ENCODE measurements at regions of chr4 and their contacts with region 1.

Region 1: GRCh38 chr4:185597532-185598188 is 62.4 kb upstream of the PDLIM3 start:
- DNase-seq: peak; percentile 8
- H3K4me3 ChIP-seq: no peak overlapping the region
- H3K27me3 ChIP-seq: 0 out of 2 replicates have a peak, but pooled peaks cover 1% of the 10 kb centered on the region
- CTCF ChIP-seq: peak; percentile 99

Region 2: DNA sequence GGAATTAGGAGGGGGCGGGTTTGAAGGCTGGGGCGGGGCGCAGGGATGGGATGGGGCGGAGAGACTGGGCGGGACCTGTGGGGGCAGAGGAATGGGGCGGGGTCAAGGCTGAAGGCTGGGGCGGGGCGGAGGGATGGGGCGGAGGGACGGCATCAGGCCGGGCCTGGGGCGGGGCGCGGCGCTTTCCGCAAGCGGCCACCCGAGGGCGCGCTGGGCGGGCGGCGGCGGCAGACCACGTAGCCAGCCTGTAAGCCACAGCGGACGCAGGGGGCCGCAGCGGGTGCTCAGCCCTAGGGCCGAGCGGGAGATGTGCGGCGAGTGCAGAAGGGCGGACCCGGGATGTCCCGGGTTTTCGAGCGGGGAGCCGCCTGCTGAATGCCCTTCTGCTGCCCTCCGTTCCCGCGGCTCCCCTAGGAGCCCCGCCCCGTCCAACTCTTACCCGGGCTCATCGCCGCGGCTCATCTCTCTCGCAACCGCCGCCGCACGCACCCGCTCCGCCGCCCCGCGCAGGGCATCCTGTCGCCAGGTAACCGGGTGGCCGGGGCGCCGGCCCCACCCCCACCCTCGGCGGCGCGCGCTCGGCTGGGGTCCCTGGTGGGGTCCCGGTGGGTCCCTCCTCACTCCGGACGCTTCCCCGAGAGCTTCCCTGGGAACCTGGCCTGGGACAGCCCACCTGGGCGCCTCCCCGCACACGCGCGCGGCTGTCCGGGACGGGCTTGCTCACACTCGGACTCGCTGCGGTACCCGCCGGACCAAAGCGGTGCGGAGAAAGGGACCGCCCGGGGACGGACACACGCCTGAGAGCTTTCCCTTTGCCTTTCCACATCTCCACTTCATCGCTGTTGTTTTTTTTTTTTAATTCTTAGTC is 126.2 kb before region 1 on chr4 and contains the start of gene CCDC110:
- CTCF ChIA-PET with region 1: interaction called, 26 read pairs
- POLR2A ChIA-PET with region 1: no interaction called
- DNase-seq: peak; percentile 18
- H3K4me3 ChIP-seq: peak within 1 kb of the TSS; percentile 60
- H3K27me3 ChIP-seq: peaks cover 16% of the 10 kb centered on the region
- CTCF ChIP-seq: peak; percentile 47
- polyA plus RNA-seq, gene CCDC110: not detected in 2 replicates

Region 3: DNA sequence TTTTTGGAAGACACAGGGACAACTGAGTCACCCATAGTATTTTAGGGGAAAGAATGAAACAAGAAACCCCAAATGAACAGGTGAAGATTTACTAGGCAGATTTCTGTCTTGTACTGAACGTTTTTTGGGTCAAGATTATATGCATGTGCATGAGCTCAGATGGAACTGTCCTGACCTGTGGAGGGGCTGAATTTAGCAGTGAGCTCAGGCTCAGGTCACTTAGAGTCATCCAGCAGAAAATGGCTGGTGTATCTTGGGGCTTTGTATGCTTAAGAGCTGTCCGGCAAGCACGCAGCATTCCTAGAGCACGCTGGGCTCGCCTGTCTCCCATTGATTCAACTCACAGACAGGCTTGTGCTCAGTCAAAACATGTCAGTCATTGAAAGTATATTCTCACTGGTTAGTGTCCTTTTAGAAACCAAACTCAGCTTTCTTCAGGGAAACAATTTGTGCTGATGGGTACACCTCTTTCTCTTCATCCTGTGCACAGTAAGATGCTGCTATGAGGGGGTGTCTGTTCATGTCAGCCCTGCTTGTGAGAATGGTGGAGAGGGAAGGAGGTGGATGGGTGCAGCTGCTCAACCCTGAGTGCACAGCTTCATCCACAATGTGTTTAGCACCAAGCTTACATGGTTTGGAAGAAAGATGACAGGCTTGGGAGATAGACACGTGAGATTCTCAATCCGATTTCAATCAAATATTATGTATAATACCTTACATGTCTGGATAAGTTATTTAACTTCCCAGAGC is 14.8 kb before region 1 on chr4:
- CTCF ChIA-PET with region 1: interaction called, 11 read pairs
- POLR2A ChIA-PET with region 1: no interaction called
- DNase-seq: no peak
- H3K4me3 ChIP-seq: no peak overlapping the region
- H3K27me3 ChIP-seq: peaks cover 4% of the 10 kb centered on the region; the same call in 1 of the 2 replicates
- CTCF ChIP-seq: no peak

Region 4: GRCh38 chr4:185608185-185608584 is 10.5 kb after region 1 on chr4:
- CTCF ChIA-PET with region 1: interaction called, 36 read pairs
- POLR2A ChIA-PET with region 1: no interaction called
- DNase-seq: no peak
- H3K4me3 ChIP-seq: no peak overlapping the region
- H3K27me3 ChIP-seq: no peaks in the 10 kb centered on the region
- CTCF ChIP-seq: no peak

Region 5: DNA sequence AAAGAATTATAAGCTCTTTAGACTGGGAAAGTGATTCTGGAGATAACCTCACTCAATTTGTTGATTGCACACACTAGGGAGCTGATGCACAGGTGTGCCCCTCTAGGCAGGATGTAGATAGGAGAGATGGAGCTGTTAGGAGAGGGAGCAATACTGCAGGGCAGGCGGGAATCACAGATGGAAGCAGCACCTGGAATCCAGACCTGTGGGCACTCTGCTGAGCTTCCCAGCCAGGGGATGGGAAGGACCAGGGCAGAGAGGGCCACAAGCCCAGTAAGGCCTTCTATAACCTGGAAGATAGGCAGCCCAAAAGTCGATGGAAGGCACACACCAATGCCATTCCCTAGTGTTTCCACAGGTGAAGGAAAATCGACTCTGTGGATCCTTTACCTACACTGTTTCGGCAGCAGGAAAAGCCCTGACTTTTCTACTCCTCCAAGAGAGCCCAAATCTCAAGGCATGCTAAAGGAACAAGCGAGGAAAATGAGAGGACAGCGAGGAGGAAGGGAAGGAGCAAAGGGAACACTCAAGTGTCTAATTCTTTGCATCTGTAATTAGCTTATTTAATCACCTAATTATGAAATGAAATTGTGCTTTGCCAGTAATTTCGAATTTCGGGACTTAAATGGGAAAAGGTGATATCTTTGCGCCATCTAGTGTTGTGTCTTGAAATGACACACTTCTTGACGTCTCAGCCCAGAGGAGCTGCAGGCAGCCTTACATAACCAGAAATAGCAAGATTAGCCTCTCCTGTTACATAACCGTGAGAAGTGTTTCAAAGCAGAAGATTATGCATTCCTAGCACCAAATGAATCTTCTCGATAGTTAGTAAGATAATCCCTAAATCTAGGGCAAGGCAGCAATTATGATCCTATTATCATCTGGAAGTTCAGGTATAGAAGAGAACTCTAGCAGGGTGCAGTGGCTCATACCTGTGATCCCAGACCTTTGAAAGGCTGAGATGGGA is 440.3 kb after region 1 on chr4:
- CTCF ChIA-PET with region 1: interaction called, 31 read pairs
- POLR2A ChIA-PET with region 1: no interaction called
- DNase-seq: peak; percentile 48
- H3K4me3 ChIP-seq: no peak overlapping the region
- H3K27me3 ChIP-seq: peaks cover 5% of the 10 kb centered on the region; the same call in 1 of the 2 replicates
- CTCF ChIP-seq: peak; percentile 69

Region 6: DNA sequence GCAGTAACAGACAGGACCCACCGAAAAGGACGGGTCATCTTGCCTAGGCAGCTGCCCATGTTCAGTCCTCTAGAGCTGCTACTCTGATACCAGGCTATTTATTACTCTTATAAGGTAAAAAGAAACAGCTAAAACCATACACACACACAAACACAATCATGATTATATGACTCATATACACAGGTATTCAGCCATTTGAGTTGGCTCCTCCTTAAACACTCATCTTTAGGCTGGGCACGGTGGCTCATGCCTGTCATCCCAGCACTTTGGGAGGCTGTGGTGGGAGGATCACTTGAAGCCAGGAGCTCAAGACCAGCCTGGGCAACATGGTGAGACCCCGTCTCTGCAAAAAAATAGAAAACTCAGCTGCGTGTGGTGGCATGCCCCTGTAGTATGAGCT is 744.9 kb after region 1 on chr4:
- CTCF ChIA-PET with region 1: no interaction called
- POLR2A ChIA-PET with region 1: no interaction called
- DNase-seq: no peak
- H3K4me3 ChIP-seq: no peak overlapping the region
- H3K27me3 ChIP-seq: no peaks in the 10 kb centered on the region
- CTCF ChIP-seq: no peak

Measured in BJ (cell line).